Heart left ventricle (tissue), 16 donors: ENCODE measurements at regions of chr18 and their contacts with region 1.

Region 1: DNA sequence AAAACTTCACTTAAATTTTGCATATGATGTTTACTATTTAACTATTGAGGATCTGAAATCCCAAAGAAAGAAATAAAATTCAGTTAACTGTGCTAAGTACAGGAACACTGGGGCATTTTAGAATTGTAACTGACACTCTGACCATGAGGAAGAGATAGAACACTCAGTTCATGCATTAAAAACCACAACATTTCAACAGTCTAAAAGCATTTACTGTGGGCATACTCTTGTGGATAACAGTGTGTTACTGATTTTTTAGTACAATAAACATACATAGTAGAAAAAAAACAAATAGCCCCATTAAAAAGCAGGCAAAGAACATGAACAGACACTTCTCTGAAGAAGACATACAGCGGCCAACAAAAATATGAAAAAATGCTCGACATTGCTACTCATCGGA is 1122.7 kb upstream of the PIK3C3 start:
- DNase-seq: no peak
- ATAC-seq: no peak
- H3K4me3 ChIP-seq: no peak overlapping the region
- H3K27ac ChIP-seq: no peak overlapping the region
- H3K4me1 ChIP-seq: no peaks in the 10 kb centered on the region
- H3K27me3 ChIP-seq: no peaks in the 10 kb centered on the region
- CTCF ChIP-seq: no peak
- POLR2A ChIP-seq: no peak

Region 2: DNA sequence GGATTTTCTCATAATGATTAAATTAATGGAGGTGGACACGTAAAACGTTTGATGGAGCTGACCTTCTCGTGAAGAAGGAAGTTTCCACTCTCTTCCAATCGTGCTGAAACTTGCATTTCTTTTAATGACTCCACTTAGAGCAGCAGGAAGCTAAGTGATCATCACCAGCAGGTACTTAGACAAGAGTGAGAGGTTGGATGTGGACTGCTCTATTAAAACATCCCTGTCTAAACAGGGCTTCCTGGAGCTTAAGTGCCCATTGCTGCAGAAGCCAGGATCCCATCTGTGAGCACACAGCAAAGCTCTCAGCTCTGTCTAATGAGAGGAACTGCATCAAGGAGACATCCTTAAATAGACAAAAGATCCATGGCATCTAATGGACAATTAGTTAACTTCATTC is 1727.3 kb before region 1 on chr18:
- intact Hi-C with region 1: no loop called
- DNase-seq: no peak
- ATAC-seq: no peak
- H3K4me3 ChIP-seq: no peak overlapping the region
- H3K27ac ChIP-seq: no peak overlapping the region
- H3K4me1 ChIP-seq: no peaks in the 10 kb centered on the region
- H3K27me3 ChIP-seq: no peaks in the 10 kb centered on the region
- CTCF ChIP-seq: no peak
- POLR2A ChIP-seq: no peak

Region 3: DNA sequence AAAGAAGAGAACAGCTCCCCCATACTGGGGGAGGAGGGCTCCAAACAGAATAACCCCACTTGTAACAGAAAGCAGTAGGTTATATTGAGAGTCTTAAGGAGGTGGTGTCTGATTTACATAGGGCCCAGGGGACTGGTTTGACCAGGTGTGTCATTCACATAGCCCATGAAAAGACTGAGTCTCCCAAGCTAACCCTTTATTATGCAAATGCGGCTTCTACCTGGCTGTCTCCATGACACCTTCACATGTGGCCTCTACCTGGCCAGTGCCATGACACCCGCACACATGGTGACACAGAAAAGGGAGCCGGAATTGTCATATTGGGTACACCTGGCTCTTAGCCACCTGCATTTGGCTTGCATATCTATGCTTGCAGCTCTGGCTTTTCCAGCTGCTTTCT is 65.5 kb after region 1 on chr18:
- intact Hi-C with region 1: loop called in 1 of 10 experiments (anchors 10 kb)
- DNase-seq: no peak
- ATAC-seq: no peak
- H3K4me3 ChIP-seq: no peak overlapping the region
- H3K27ac ChIP-seq: no peak overlapping the region
- H3K4me1 ChIP-seq: no peaks in the 10 kb centered on the region
- H3K27me3 ChIP-seq: no peaks in the 10 kb centered on the region
- CTCF ChIP-seq: no peak
- POLR2A ChIP-seq: no peak

Region 4: GRCh38 chr18:40995529-40995928 is 163.2 kb after region 1 on chr18:
- intact Hi-C with region 1: no loop called
- DNase-seq: no peak
- ATAC-seq: no peak
- H3K4me3 ChIP-seq: no peak overlapping the region
- H3K27ac ChIP-seq: no peak overlapping the region
- H3K4me1 ChIP-seq: no peaks in the 10 kb centered on the region
- H3K27me3 ChIP-seq: no peaks in the 10 kb centered on the region
- CTCF ChIP-seq: no peak
- POLR2A ChIP-seq: no peak